Tibial artery (tissue), 4 donors: ENCODE measurements at regions of chr7 and their contacts with region 1.

Region 1: DNA sequence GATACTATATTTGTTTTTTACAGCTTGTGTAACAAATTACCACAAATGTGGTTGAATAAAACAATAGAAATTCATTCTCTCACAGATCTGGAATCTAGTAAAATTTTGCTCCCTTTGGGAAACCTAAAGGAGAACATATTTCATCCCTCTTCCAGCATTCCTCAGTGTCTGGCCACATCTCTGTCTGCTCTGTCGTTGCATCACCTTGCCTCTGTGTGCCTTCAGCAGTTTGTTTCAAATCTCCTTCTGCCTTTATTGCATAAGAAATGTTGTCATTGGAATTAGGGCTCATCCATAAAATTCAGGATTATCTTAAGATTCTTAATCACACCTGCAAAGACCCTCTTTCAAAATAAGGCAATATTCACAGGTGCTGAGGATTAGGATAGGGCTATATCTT is 14.5 kb downstream of the OR2A14 start:
- DNase-seq: no peak
- H3K4me3 ChIP-seq: no peak overlapping the region
- H3K27ac ChIP-seq: no peak overlapping the region
- H3K4me1 ChIP-seq: no peaks in the 10 kb centered on the region
- H3K27me3 ChIP-seq: no peaks in the 10 kb centered on the region
- CTCF ChIP-seq: no peak

Region 2: GRCh38 chr7:142139597-142140400 is 1997.7 kb before region 1 on chr7:
- intact Hi-C with region 1: loop called (anchors 10 kb)
- DNase-seq: no peak
- H3K4me3 ChIP-seq: no peak overlapping the region
- H3K27ac ChIP-seq: no peak overlapping the region
- H3K4me1 ChIP-seq: no peaks in the 10 kb centered on the region
- H3K27me3 ChIP-seq: no peaks in the 10 kb centered on the region
- CTCF ChIP-seq: no peak

Region 3: DNA sequence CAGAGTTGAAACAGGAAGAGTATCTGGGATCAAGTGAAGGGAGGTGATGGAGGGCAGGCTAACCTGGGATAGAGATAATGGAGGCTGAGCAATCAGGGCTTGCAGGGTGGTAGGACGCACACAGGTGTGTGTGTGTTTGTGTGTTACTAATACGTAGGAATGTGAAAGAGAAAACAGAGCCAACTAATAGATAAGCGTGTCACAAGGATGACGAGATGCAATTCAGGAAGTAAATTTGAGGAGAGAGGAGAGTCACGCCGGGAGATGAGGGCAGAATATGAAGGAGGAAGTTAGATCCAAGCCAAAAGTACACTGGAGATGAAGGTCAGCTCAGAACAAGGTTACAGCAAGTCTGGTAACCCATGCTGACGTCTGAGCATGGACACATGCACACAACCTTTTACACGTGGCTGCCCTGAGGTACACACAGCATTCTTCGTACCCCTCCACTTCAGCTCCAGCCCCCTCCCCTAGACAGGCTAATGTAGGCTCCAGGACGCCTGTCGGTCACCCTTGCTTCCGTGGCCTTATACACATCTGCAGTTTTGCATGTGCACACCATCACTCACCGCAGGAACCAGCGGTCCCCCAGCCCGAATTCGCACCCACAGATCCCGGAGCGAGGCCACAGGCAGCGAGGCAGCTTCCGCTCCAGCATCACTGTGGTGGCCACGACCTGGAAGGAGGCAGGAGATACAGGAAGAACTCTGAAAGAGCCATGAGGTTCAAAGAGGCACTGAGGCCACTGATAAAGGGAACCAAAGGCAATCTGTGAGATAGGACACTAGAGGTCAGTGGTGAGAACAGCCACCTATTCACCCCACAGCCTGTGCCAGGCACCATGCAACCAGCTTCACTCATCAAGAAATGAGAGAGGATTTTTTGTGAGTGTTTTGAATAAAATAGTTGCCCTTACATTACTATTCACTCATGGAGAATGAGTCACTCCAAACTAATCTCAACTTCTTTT is 1228.3 kb before region 1 on chr7:
- intact Hi-C with region 1: no loop called
- DNase-seq: no peak
- H3K4me3 ChIP-seq: no peak overlapping the region
- H3K27ac ChIP-seq: no peak overlapping the region
- H3K4me1 ChIP-seq: no peaks in the 10 kb centered on the region
- H3K27me3 ChIP-seq: peaks cover 0 to 9% of the 10 kb centered on the region in 2 donors
- CTCF ChIP-seq: no peak